ENCODE measurements at regions of chr14 and their contacts with region 1.

Region 1: GRCh38 chr14:50599700-50600444 is 39.9 kb downstream of the ATL1 start:
- DNase-seq: no peak
- H3K4me3 ChIP-seq: no peak overlapping the region
- H3K27ac ChIP-seq: no peak overlapping the region
- H3K4me1 ChIP-seq: no peaks in the 10 kb centered on the region
- H3K27me3 ChIP-seq: no peaks in the 10 kb centered on the region
- CTCF ChIP-seq: peak; percentile 28 to 66 (median 44)
- POLR2A ChIP-seq: no peak

Region 2: GRCh38 chr14:50272503-50272902 is 327.4 kb before region 1 on chr14:
- intact Hi-C with region 1: no loop called
- DNase-seq: no peak
- H3K4me3 ChIP-seq: no peak overlapping the region
- H3K27ac ChIP-seq: no peak overlapping the region
- H3K4me1 ChIP-seq: no peaks in the 10 kb centered on the region
- H3K27me3 ChIP-seq: no peaks in the 10 kb centered on the region
- CTCF ChIP-seq: no peak
- POLR2A ChIP-seq: no peak

Region 3: GRCh38 chr14:50647282-50647681 is 47.4 kb after region 1 on chr14:
- intact Hi-C with region 1: no loop called
- DNase-seq: no peak
- H3K4me3 ChIP-seq: no peak overlapping the region
- H3K27ac ChIP-seq: no peak overlapping the region
- H3K4me1 ChIP-seq: no peaks in the 10 kb centered on the region
- H3K27me3 ChIP-seq: no peaks in the 10 kb centered on the region
- CTCF ChIP-seq: no peak
- POLR2A ChIP-seq: no peak

Region 4: DNA sequence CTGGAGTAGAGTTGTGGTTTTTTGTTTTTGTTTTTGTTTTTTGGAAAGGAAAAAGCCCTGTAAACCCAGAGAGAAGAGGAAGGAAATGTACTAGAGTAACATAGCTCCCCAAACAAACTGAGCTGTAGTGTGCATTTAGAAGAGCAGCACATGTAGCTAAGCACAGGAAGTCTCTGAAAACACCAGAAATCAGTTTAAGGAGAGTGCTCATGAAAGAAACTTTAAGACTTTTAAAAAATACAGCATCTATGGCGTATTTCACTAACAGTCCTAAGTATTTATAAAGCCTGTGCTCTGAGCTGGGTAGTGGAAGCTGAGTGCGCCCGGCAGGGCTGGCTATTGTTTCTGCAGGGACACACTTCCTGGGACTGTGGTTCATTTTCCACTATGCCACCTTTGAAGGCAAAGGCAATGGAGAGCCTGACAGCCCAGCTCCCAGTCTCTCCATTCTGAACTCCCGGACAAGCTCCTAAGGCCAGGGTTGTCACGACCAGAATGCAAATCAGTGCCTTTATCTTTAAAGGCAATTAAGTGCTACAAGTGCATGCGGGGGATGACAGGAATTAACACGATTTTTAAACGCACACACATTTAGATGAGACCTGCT is 185.7 kb after region 1 on chr14:
- intact Hi-C with region 1: loop called (anchors 10 kb)
- DNase-seq: no peak
- H3K4me3 ChIP-seq: no peak overlapping the region
- H3K27ac ChIP-seq: no peak overlapping the region
- H3K4me1 ChIP-seq: no peaks in the 10 kb centered on the region
- H3K27me3 ChIP-seq: no peaks in the 10 kb centered on the region
- CTCF ChIP-seq: no peak
- POLR2A ChIP-seq: no peak

Measured in uterus (tissue), 4 donors.